H1 (cell line): ENCODE measurements at regions of chr17 and their contacts with region 1.

Region 1: GRCh38 chr17:69335058-69335457 is 8.1 kb upstream of the ABCA5 start:
- DNase-seq: no peak
- H3K4me3 ChIP-seq: no peak overlapping the region
- H3K27ac ChIP-seq: no peak overlapping the region
- H3K4me1 ChIP-seq: no peaks in the 10 kb centered on the region
- H3K27me3 ChIP-seq: no peaks in the 10 kb centered on the region
- CTCF ChIP-seq: peak in 2 of 3 experiments; percentile 48 to 55; a peak in 2 of 4 replicates
- EP300 ChIP-seq: no peak
- POLR2A ChIP-seq: no peak
- RAD21 ChIP-seq: peak; percentile 70 to 73

Region 2: DNA sequence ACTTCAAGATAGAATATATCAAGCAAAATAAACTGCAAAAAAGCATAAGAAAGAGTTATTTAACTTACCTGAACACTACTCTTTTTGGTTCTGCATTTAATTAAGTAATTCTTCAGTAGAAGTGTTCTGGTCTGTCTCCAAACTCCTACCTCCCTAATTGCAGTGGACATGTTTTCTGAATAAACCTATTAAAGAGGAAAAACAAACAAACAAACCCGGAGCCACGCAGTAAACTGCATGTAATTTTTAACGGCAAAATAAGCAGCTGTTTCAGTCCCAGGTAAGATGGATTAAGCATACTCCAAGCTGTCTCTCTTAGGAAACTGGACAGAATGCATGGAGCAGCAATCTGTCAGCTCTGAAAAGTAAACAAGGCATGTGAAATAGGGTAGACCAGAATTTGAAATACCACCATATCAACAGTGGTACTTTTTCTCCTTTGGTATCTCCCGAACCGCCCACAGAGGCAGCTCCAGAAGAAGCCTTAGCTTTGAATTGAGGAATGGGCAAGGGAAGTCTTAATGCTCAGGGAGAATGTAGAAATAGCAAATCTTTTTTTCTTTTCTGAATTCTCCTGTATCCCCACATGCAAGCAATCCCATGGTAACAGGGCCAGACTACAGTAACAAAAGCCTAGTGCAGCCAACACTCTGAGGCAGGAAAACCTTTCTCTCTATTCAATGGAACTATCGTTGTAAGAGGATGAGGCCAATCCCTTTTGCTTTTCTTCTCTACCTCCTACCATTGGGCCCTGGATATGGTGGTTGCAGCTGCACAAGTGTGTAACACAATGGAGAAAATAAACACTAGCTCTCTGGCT is 20.6 kb before region 1 on chr17:
- CTCF ChIA-PET with region 1: interaction called, 12 read pairs
- POLR2A ChIA-PET with region 1: no interaction called
- DNase-seq: no peak
- H3K4me3 ChIP-seq: no peak overlapping the region
- H3K27ac ChIP-seq: no peak overlapping the region
- H3K4me1 ChIP-seq: no peaks in the 10 kb centered on the region; a peak in 1 of 7 replicates
- H3K27me3 ChIP-seq: no peaks in the 10 kb centered on the region
- CTCF ChIP-seq: no peak
- EP300 ChIP-seq: no peak
- POLR2A ChIP-seq: no peak
- RAD21 ChIP-seq: no peak

Region 3: DNA sequence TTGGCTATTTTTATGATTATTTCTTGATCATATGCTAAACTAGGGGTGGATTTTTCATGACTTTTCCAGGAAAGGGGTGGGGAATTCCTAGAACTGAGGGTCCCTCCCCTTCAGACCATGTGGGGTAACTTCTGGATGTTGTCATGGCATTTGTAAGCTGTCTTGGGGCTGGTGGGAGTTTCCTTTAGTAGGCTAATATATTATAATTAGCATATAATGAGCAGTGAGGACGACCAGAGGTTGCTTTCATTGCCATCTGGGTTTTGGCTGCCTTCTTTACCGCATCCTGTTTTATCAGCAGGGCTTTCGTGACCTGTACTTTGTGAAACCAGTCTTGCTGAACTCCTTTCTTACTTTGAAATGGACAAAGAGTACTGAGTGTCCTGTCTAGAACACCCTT is 32.2 kb after region 1 on chr17:
- CTCF ChIA-PET with region 1: no interaction called
- POLR2A ChIA-PET with region 1: no interaction called
- DNase-seq: no peak
- H3K4me3 ChIP-seq: no peak overlapping the region
- H3K27ac ChIP-seq: no peak overlapping the region
- H3K4me1 ChIP-seq: no peaks in the 10 kb centered on the region; a peak in 1 of 7 replicates
- H3K27me3 ChIP-seq: no peaks in the 10 kb centered on the region
- CTCF ChIP-seq: no peak
- EP300 ChIP-seq: no peak
- POLR2A ChIP-seq: no peak
- RAD21 ChIP-seq: no peak

Region 4: GRCh38 chr17:69388822-69389442 is 53.9 kb after region 1 on chr17:
- CTCF ChIA-PET with region 1: interaction called, 32 read pairs
- POLR2A ChIA-PET with region 1: no interaction called
- DNase-seq: no peak
- H3K4me3 ChIP-seq: no peak overlapping the region
- H3K27ac ChIP-seq: no peak overlapping the region
- H3K4me1 ChIP-seq: no peaks in the 10 kb centered on the region
- H3K27me3 ChIP-seq: no peaks in the 10 kb centered on the region
- CTCF ChIP-seq: no peak
- EP300 ChIP-seq: no peak
- POLR2A ChIP-seq: no peak
- RAD21 ChIP-seq: no peak